Activated CD4-positive, alpha-beta T cell treated with anti-CD3 and anti-CD28 coated beads, Interleukin-2, amount 10 ng/mL, durations not matched to agents 7 days and 5 days (primary cell): ENCODE measurements at regions of chr22 and their contacts with region 1.

Region 1: GRCh38 chr22:19178656-19179496 is at the start of gene SLC25A1:
- DNase-seq: peak; percentile 85
- H3K4me3 Mint-ChIP-seq: peak within 1 kb of the TSS; percentile 80
- H3K27ac Mint-ChIP-seq: peak within 1 kb of the TSS; percentile 83
- H3K4me1 Mint-ChIP-seq: peaks cover 29% of the 10 kb centered on the region
- H3K27me3 Mint-ChIP-seq: no peaks in the 10 kb centered on the region
- total RNA-seq, gene SLC25A1: 40.4 to 49.2 TPM

Region 2: DNA sequence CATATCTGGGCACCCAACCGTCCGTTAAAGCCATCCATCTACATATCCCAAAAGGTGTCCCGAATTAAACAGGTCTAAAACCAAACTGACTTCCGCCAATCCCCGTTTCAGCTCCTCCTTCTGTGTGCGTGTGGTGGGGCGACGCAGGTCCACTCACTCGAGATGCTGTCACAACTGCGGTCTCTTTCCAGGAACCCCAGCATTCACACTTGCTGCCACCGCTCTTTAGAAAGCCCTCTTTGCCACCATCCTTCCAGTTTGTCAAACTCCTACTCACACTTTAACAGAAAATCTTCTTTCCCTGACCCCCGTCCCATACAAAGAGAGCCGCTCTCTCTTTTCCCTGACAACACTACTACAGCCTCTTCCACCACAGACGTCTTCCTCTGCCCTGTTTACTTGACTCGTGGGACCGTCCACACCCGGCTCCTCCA is 34.9 kb before region 1 on chr22:
- CTCF ChIA-PET with region 1: interaction called, 10 read pairs
- POLR2A ChIA-PET with region 1: interaction called, 3 read pairs
- DNase-seq: peak; percentile 55
- H3K4me3 Mint-ChIP-seq: peak overlapping the region; percentile 99
- H3K27ac Mint-ChIP-seq: peak overlapping the region; percentile 97
- H3K4me1 Mint-ChIP-seq: peaks cover 19% of the 10 kb centered on the region
- H3K27me3 Mint-ChIP-seq: peaks cover 22% of the 10 kb centered on the region